ENCODE measurements at regions of chr4 and their contacts with region 1.

Region 1: GRCh38 chr4:148288448-148288847 is 153.8 kb downstream of the NR3C2 start:
- DNase-seq: peak; percentile 86
- ATAC-seq: peak; percentile 89

Region 2: GRCh38 chr4:147638942-147639341 is 649.5 kb before region 1 on chr4:
- intact Hi-C with region 1: no loop called
- DNase-seq: no peak
- ATAC-seq: no peak

Region 3: DNA sequence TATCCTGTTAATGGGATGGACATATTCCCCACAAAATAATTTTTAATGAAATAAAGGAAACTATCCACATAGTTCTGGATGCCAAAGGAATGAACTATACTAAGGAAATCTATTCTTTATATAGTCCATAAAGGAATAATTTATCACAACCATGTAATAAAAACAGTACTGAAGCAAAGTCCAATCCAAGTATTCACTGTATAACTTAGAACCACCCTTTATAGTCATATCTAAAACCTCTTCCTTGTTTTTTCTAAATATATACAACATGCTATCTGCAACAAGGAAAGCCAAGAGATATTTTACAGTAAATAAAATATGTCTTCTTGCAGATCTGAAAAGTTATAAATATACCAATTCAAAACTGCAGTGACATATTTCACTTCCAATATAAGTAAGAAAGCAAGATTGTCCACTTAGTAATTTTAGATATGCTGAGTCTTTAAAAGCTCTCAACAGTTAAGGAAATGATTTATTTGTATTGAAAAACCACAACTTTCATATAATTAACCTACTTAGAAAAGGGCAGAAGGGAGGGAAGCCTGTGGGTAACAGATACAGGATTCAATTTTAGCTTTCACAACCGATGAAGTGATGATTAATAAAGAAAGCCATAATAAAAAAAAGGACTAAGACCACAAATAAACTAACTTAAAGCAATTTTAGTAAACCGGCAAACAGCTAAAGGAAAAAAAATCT is 145.8 kb after region 1 on chr4:
- intact Hi-C with region 1: loop called (anchors 10 kb)
- DNase-seq: no peak
- ATAC-seq: no peak